ENCODE measurements at regions of chr1 and their contacts with region 1.

Region 1: GRCh38 chr1:114094675-114095074 is 59.0 kb downstream of the SYT6 start:
- DNase-seq: no peak
- H3K4me3 ChIP-seq: no peak overlapping the region
- H3K27ac ChIP-seq: no peak overlapping the region
- H3K4me1 ChIP-seq: peaks cover 12% of the 10 kb centered on the region
- H3K27me3 ChIP-seq: no peaks in the 10 kb centered on the region
- CTCF ChIP-seq: no peak

Region 2: GRCh38 chr1:112402682-112403643 is 1691.7 kb before region 1 on chr1:
- CTCF ChIA-PET with region 1: interaction called, 10 read pairs
- POLR2A ChIA-PET with region 1: no interaction called
- intact Hi-C with region 1: no loop called
- DNase-seq: no peak
- H3K4me3 ChIP-seq: no peak overlapping the region
- H3K27ac ChIP-seq: no peak overlapping the region
- H3K4me1 ChIP-seq: peaks cover 39% of the 10 kb centered on the region
- H3K27me3 ChIP-seq: no peaks in the 10 kb centered on the region
- CTCF ChIP-seq: no peak

Region 3: GRCh38 chr1:114040326-114041015 is 54.2 kb before region 1 on chr1:
- CTCF ChIA-PET with region 1: no interaction called
- POLR2A ChIA-PET with region 1: no interaction called
- intact Hi-C with region 1: no loop called
- DNase-seq: no peak
- H3K4me3 ChIP-seq: no peak overlapping the region
- H3K27ac ChIP-seq: no peak overlapping the region
- H3K4me1 ChIP-seq: no peaks in the 10 kb centered on the region
- H3K27me3 ChIP-seq: no peaks in the 10 kb centered on the region
- CTCF ChIP-seq: no peak

Region 4: GRCh38 chr1:114081437-114082303 is 13.0 kb before region 1 on chr1:
- CTCF ChIA-PET with region 1: no interaction called
- POLR2A ChIA-PET with region 1: no interaction called
- intact Hi-C with region 1: no loop called
- DNase-seq: peak; percentile 29
- H3K4me3 ChIP-seq: no peak overlapping the region
- H3K27ac ChIP-seq: peak overlapping the region; percentile 62
- H3K4me1 ChIP-seq: peaks cover 31% of the 10 kb centered on the region
- H3K27me3 ChIP-seq: no peaks in the 10 kb centered on the region
- CTCF ChIP-seq: no peak